ENCODE measurements at regions of chr2 and their contacts with region 1.

Region 1: DNA sequence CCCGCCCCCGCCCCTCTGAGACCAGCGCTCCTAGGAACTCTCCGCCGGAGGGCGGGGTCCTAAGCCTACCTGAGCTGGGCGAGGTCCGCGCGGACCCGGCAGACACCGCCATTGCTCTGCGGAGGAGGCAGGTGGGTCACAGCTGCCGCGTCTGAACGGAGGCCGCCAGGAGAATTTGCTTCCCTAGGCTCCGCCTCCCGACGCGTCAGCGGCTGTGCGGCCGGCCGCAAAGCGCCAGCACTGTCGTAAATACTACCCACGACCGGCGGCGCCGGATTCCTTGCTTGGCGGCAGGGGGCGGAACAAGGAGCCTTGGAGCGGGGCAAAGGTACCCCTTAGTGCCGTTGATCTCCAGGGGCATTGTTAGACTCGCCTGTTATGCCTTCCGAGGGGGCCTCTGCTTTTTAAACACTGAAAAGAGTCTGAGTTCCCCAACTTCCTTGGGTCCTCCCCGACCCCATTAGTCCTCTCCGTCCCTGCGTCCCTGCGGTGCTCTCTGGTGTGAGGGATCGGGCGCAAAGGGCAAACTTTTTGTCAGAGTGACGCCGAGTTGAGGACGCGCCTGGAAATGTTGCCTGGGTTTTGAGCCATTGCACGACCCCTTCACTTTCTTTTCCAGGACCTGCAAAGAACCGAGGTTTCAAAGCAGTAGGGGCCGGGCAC is at the start of gene GGCX:
- DNase-seq: peak; percentile 89 to 91 (median 89)
- H3K4me3 ChIP-seq: peak within 1 kb of the TSS; percentile 66 to 99 (median 82)
- H3K4me3 Mint-ChIP-seq: peak within 1 kb of the TSS; percentile 94 to 99
- H3K27ac ChIP-seq: peak within 1 kb of the TSS; percentile 80 to 94
- H3K27ac Mint-ChIP-seq: peak within 1 kb of the TSS; percentile 91 to 97 (median 95)
- H3K4me1 ChIP-seq: peaks cover 44 to 52% of the 10 kb centered on the region in 2 donors
- H3K4me1 Mint-ChIP-seq: peaks cover 46% of the 10 kb centered on the region
- H3K27me3 ChIP-seq: no peaks in the 10 kb centered on the region
- H3K27me3 Mint-ChIP-seq: no peaks in the 10 kb centered on the region
- CTCF ChIP-seq: no peak
- polyA plus RNA-seq, gene GGCX: 24.0 to 34.4 (median 32.0) TPM

Region 2: DNA sequence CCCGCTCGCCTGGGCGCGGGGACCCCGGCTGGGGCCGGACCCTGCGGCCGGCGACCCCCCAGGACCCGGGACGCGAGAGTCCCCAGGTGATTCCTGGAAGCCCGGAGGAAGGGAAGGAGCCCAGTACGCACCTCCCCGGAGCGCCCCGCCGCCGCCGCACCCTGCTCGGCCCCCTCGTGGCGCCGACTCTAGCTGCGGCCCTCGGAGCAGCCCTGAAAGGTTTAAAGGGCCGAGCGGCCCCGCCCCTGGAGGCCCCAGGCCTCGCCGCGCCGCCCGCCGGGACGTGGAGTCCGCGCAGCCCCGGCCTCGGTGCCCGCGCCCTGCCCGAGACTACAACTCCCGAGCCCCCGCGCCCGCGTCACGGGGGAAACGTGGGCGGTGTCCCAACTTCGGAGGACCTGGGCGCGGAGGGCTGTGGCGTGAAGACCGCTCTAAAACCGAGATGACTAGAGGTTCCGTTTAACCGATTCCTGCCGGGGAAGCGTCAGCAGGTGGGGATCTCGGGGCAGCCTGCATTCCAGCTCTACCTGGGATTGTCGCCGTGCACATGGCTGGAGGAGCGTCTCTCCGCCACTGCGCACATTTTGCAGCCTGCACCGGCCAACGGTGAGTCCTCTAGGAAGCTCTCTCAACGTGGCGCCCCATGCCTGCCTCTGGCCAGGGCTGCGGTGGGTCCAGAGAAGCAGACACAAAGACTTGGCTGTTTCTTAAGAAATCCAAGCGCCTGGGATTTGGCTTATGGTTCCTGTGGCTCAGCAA is 41.2 kb after region 1 on chr2 and contains the start of gene TMEM150A:
- intact Hi-C with region 1: loop called (anchors 5 kb)
- DNase-seq: peak; percentile 75 to 84 (median 76)
- H3K4me3 ChIP-seq: peak within 1 kb of the TSS; percentile 58 to 95 (median 82)
- H3K4me3 Mint-ChIP-seq: peak within 1 kb of the TSS; percentile 91 to 94
- H3K27ac ChIP-seq: peak within 1 kb of the TSS; percentile 18 to 63
- H3K27ac Mint-ChIP-seq: peak within 1 kb of the TSS; percentile 70 to 84 (median 80)
- H3K4me1 ChIP-seq: peaks cover 23 to 37% of the 10 kb centered on the region in 2 donors
- H3K4me1 Mint-ChIP-seq: peaks cover 40% of the 10 kb centered on the region
- H3K27me3 ChIP-seq: no peaks in the 10 kb centered on the region
- H3K27me3 Mint-ChIP-seq: peaks cover 1 to 4% (median 3%) of the 10 kb centered on the region in 3 donors
- CTCF ChIP-seq: peak; percentile 59
- polyA plus RNA-seq, gene TMEM150A: 24.7 to 29.1 (median 26.6) TPM

Measured in CD14-positive monocyte (primary cell).